HEK293T (cell line): ENCODE measurements at regions of chr1 and their contacts with region 1.

Region 1: GRCh38 chr1:59720326-59721115 is 94.2 kb upstream of the HOOK1 start:
- DNase-seq: no peak

Region 2: DNA sequence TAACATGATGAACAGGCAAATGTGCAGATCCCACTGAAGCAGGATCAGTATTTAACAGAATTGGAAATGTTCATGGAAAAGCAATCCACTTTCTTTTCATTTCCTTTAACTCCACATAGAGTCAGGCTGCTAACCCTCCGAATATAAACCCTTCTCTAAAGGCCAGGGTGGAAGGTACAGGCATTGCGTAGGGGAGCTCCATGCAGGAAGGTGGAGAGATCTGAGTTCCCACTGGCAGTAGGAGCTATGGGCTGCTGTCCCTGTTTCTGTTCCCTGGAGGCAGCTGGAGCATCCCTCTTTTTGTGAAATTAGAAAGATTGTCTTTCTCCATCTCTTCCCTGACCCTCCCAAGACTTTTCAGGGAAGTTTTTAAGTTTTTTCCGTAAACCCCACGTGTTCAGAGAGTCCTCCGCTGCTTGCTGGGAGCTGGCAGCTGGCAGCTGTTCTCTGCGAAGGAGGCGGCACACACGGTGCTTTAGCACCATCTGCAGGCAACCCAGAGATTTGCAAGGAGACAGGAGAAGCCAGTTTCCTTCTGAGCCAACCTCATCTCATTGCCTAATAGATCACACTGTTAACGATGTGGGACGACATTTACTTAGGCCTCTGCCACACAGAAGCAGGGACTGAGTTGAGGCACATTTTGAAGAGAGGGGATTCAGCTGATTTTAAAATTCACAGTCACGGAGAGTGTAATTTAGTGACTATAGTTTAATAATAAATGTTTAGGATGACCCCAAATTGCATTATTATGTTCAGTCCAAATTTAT is 38.8 kb after region 1 on chr1:
- CTCF ChIA-PET with region 1: interaction called, 11 read pairs
- POLR2A ChIA-PET with region 1: no interaction called
- DNase-seq: peak; percentile 98